Right ventricle myocardium inferior (tissue), 1 donor: ENCODE measurements at regions of chr5 and their contacts with region 1.

Region 1: DNA sequence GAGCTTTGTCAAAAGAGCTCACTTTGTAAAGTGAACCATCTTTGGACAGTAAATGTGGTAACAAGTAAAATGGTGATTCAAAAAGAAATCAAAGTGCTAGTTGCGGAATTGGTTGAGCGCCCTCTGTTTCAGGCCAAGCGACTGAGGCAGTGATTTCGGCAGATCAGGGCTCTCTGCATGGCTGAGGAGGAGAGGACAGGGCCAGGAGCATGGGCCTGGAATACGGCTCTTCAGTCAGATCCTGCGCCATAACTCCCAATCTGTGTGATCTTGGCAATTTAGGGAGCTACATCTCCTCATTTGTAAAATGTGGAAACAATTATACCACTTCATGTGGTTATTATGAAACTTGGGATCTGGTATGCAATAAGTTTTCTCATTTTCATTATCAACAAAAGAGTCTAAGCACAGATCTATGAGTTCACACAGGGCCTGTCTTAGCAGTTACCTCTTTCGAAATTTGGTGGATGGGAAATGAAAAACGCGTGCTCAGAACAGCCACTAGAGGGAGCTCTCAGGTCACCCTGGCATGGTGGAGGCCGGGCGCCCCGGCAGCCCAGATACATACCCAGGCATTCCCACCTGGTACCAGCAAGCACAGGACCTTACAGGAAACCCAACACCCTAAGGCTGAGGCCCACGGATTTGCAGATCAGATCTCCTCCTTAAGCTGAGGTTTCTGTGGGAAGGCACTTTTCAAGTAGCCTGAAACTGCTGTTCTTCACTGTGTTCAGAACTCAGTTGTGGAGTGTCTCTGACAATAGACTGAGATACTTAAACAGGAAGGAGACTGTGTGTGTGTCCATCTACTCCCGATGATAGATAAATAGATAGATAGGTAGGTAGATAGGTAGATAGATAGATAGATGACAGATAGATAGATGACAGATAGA is 303.7 kb downstream of the RAB3C start:
- DNase-seq: peak; percentile 75
- ATAC-seq: peak; percentile 43

Region 2: DNA sequence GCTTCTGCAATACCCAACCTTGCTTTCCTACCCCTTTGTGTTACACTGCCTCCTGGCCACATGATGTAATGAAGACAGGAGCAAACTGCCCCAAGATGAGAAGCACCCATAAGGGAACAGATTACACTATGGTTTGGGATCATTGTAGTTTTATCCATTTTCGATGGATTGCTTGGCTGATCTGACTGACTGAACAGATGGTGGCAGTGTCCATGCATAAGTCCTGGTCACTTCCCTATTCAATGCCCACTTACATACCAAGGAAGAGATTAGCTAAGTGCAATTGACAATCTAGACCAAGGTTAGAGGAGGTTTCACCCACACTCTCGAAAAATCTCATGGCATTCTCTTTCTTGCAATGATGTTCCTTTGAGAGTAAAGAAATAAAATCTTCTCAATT is 16.2 kb after region 1 on chr5:
- intact Hi-C with region 1: no loop called
- DNase-seq: no peak
- ATAC-seq: no peak

Region 3: DNA sequence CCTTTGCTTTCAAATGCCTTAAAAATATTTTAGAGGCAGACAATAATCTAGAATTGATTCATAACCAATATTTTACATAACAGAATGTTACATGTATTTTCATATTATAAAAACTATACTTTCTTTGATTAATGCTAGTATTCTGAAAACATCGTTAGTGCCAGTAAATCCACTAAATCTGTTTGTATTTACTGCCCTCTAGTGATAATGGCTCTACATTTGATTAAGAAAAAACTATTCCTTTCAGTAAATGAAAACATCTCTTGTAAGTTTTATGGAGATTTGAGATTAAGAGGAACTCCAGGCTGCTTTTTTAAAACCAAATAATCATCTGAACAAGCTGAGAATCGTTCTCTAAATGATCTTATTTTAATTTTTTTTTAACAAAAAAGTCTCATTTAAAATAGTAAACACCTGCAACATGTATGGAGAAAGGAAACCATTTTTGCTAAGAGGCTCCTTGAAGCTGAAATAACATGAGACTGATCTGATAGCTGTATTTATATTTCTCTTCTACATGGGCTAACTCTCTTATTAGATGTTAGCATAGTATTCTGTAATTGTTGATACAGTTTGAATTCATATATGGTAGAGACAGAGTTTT is 121.0 kb after region 1 on chr5:
- intact Hi-C with region 1: loop called (anchors 2 kb)
- DNase-seq: no peak
- ATAC-seq: no peak

Region 4: DNA sequence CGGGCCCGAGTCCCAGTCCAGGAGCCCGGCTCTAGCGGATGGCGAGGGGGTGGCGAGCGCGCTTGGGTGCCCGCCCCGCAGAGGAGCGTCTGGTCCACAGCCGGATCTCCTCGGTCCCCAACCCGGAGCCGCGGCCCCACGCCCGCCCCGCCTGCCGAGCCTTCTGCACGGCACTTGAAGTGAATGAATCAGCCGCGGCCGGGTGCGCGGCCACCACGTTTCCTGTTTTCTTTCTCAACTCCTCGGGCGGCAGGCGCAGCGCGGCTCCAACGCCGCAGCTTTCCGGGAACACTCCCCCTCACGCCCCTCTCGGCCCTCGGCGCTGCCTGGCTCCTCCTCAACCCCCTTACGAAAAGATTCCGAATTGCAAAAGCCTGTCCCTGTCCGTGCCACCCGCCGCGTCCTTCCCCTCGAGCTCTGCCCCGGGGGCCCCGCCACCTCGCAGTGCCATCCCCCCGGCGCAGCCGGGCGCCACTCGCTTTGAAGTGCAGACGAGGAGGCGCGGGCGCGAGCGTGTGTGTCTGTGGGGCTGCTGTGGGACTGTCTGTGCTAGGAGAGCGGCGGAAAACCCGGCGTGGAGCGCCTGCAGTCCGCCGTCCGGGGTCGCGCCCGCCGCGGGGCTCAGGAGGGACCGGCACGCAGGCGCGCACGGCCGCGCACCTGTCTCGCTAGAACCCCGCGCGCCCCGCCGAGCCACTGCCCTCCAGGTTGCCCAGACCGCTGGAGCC is 152.9 kb after region 1 on chr5:
- intact Hi-C with region 1: no loop called
- DNase-seq: peak; percentile 96
- ATAC-seq: peak; percentile 73

Region 5: DNA sequence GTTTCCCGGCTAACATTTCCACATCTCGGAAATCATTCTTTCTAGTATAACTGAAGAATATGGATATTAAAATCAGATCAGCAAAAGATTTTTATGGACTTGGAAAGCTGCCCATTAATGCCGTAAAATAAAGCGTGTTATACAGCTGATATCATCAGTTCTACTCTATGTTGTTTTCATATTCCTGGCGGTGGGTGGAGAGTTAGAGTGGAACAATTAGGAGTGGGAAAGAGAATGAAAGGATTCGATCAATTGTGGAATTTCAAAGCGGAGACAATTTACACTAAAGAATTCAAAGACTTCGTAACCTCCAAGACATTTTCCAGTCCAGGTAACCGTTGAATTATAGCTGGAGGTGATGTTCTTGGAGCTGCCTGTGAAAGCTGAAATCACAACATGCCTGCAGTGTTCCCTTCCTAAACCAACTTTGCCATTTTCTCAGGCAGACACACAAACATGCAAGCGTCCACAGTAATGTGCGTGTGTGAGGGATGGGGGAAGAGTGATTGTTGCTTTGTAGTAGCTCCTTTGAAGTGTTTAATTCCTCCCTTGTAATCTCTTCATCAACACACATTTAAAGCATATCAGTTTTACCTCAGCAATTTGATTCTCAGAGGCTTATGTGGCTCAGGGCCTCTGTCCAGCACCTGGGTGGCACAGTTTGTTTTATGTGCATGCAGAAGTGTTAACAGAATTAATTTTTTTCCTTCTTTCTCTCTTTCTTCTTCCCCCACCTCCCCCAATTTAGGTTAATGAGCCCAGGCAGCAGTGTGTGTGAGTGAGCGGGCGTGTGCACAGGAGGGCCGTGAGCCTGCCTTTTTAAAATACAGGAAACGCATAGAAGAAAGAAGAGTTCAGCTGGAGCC is 240.4 kb after region 1 on chr5:
- intact Hi-C with region 1: loop called (anchors 5 kb)
- DNase-seq: no peak
- ATAC-seq: no peak

Region 6: DNA sequence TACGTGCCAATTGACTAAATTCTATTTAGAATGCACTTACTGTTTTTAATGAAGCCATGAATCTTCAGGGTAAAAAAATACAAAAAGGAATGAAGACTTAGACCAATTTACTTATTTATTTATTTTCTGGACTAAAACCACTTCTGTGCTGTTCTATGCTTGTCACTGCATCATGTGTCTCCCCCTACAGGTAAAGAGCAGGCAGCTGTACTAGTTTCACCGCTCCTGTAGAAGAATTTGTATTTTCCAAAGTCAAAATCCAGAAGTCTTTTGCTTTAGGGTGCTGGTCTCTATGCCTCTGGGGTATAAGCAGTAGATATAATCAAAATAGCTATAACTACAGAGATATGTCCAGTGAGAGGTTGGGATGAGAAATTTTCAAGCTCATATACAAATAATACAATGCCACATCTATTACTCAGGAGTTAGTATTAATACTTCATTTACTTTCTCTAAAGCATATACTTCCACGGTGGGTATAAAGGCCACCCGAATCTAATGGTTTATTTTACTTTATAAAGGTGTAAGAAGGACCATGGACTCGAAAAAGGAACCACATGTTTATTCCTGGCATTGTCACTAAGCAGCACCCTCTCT is 287.8 kb after region 1 on chr5:
- intact Hi-C with region 1: loop called (anchors 5 kb)
- DNase-seq: no peak
- ATAC-seq: peak; percentile 79

Region 7: GRCh38 chr5:59342181-59342580 is 455.6 kb after region 1 on chr5:
- intact Hi-C with region 1: no loop called
- DNase-seq: no peak
- ATAC-seq: no peak

Region 8: GRCh38 chr5:59367791-59368394 is 481.3 kb after region 1 on chr5:
- intact Hi-C with region 1: loop called (anchors 10 kb)
- DNase-seq: no peak
- ATAC-seq: peak; percentile 59